Activated CD4-positive, alpha-beta memory T cell treated with anti-CD3 and anti-CD28 coated beads for 36 hours (primary cell): ENCODE measurements at regions of chr19 and their contacts with region 1.

Region 1: GRCh38 chr19:29671393-29672160 is 6.3 kb downstream of the PLEKHF1 start:
- DNase-seq: peak; percentile 95
- H3K4me3 Mint-ChIP-seq: peak overlapping the region; percentile 66
- H3K27ac Mint-ChIP-seq: peak overlapping the region; percentile 99
- H3K4me1 Mint-ChIP-seq: peaks cover 89% of the 10 kb centered on the region
- H3K27me3 Mint-ChIP-seq: no peaks in the 10 kb centered on the region

Region 2: GRCh38 chr19:29212648-29213573 is 458.7 kb before region 1 on chr19 and contains the start of gene UQCRFS1:
- CTCF ChIA-PET with region 1: no interaction called
- POLR2A ChIA-PET with region 1: no interaction called
- intact Hi-C with region 1: loop called (anchors 2 kb)
- DNase-seq: peak; percentile 98
- H3K4me3 Mint-ChIP-seq: peak within 1 kb of the TSS; percentile 95
- H3K27ac Mint-ChIP-seq: peak within 1 kb of the TSS; percentile 94
- H3K4me1 Mint-ChIP-seq: peaks cover 42% of the 10 kb centered on the region
- H3K27me3 Mint-ChIP-seq: peaks cover 2% of the 10 kb centered on the region
- total RNA-seq, gene UQCRFS1: 42.0 to 43.9 TPM

Region 3: GRCh38 chr19:29505097-29505824 is 166.3 kb before region 1 on chr19:
- CTCF ChIA-PET with region 1: no interaction called
- POLR2A ChIA-PET with region 1: no interaction called
- intact Hi-C with region 1: no loop called
- DNase-seq: no peak
- H3K4me3 Mint-ChIP-seq: no peak overlapping the region
- H3K27ac Mint-ChIP-seq: no peak overlapping the region
- H3K4me1 Mint-ChIP-seq: no peaks in the 10 kb centered on the region
- H3K27me3 Mint-ChIP-seq: peaks cover 19% of the 10 kb centered on the region

Region 4: DNA sequence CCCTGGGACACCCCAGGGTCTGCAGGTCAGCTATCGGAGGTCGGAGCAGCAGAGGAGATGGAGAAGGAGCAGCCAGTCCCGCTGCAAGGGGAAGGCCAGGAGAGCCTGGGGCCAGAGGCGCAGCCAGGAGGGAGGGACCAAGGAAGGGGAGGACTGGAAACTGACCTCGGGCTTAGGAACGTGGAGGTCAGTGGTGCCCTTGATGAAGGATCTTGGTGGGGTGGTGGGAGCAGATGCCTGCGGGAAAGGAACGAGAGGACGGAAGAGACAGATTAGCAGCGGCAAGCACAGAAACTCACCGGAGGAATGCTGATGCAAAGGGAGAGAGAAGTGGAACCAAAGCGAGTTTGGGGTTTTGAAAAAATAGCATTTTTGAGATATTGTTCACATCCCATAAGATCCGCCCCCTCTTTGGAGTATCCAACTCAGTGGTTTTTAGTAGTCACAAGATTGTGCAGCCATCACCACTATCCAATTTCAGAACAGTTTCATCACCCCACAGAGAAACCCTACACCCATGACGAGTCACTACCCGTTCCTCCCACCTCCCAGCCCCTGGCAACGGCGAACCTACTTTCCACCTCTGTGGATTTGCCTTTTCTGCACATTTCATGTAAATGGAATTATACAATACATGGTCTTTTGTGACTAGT is 15.8 kb after region 1 on chr19:
- CTCF ChIA-PET with region 1: interaction called, 30 read pairs
- POLR2A ChIA-PET with region 1: interaction called, 37 read pairs
- intact Hi-C with region 1: loop called (anchors 1 kb)
- DNase-seq: peak; percentile 78
- H3K4me3 Mint-ChIP-seq: no peak overlapping the region
- H3K27ac Mint-ChIP-seq: peak overlapping the region; percentile 76
- H3K4me1 Mint-ChIP-seq: peaks cover 37% of the 10 kb centered on the region
- H3K27me3 Mint-ChIP-seq: no peaks in the 10 kb centered on the region

Region 5: DNA sequence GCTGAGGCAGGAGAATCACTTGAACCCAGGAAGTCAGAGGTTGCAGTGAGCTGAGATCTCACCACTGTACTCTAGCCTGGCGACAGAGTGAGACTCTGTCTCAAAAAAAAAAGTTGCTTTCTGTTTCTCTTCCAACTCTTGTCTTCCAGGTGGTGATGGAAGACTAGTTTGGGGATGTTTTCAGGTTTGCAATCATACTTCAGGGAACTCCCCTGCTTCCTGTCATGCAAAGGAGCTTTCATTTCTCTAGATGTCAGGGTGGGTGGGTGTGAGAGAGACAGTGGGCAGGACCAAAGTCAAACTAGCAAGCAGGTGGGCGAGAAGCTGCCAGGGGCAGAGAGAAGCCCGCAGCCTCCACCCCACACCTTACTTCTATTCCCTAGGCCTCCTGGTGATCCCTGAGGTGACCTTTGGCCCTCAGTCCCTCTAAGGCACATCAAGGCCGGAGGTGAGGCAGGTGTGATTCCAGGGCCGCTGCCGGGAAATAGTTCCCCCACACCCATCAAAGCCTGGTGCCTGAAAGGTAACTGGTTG is 165.9 kb after region 1 on chr19:
- CTCF ChIA-PET with region 1: no interaction called
- POLR2A ChIA-PET with region 1: no interaction called
- intact Hi-C with region 1: loop called (anchors 2 kb)
- DNase-seq: peak; percentile 75
- H3K4me3 Mint-ChIP-seq: peak overlapping the region; percentile 55
- H3K27ac Mint-ChIP-seq: peak overlapping the region; percentile 93
- H3K4me1 Mint-ChIP-seq: peaks cover 46% of the 10 kb centered on the region
- H3K27me3 Mint-ChIP-seq: no peaks in the 10 kb centered on the region

Region 6: DNA sequence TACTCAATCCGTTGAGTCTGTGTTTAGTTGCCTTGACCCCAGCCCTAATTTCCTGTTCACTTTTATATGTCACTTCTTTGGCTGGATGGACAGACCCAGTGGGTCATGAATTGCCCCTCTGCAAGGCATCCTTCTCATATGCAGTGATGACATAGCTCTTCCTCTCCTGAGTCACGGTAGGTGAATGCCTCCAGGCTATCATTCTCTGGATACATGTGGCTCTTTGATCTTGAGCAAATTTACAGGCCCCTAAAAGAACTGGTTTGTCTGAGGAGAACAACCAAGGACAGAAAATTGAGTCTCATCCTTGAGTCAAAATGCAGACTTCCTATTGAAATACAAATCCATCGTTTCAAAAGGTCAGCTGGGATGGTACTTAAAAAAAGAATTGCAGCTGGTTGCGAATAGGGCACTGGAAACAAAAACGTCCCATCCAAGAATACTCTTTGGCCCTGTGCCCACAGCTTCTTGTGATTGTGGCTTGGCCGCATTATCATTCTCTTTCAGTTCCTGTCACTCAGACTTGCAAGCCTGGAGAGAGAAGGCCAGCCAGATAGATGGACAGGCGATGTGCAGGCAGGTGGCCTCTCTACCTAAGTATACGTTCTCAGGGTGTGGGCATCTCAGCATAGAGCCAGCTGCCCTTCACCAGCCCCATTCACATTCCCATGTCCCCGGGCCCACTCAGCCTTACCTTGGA is 491.9 kb after region 1 on chr19:
- CTCF ChIA-PET with region 1: no interaction called
- POLR2A ChIA-PET with region 1: no interaction called
- intact Hi-C with region 1: no loop called
- DNase-seq: no peak
- H3K4me3 Mint-ChIP-seq: no peak overlapping the region
- H3K27ac Mint-ChIP-seq: no peak overlapping the region
- H3K4me1 Mint-ChIP-seq: no peaks in the 10 kb centered on the region
- H3K27me3 Mint-ChIP-seq: peaks cover 1% of the 10 kb centered on the region

Region 7: GRCh38 chr19:31214086-31214485 is 1542.5 kb after region 1 on chr19:
- CTCF ChIA-PET with region 1: no interaction called
- POLR2A ChIA-PET with region 1: no interaction called
- intact Hi-C with region 1: loop called (anchors 5 kb)
- DNase-seq: peak; percentile 96
- H3K4me3 Mint-ChIP-seq: peak overlapping the region; percentile 69
- H3K27ac Mint-ChIP-seq: peak overlapping the region; percentile 99
- H3K4me1 Mint-ChIP-seq: peaks cover 26% of the 10 kb centered on the region
- H3K27me3 Mint-ChIP-seq: peaks cover 3% of the 10 kb centered on the region